H1 (cell line): ENCODE measurements at regions of chr11 and their contacts with region 1.

Region 1: DNA sequence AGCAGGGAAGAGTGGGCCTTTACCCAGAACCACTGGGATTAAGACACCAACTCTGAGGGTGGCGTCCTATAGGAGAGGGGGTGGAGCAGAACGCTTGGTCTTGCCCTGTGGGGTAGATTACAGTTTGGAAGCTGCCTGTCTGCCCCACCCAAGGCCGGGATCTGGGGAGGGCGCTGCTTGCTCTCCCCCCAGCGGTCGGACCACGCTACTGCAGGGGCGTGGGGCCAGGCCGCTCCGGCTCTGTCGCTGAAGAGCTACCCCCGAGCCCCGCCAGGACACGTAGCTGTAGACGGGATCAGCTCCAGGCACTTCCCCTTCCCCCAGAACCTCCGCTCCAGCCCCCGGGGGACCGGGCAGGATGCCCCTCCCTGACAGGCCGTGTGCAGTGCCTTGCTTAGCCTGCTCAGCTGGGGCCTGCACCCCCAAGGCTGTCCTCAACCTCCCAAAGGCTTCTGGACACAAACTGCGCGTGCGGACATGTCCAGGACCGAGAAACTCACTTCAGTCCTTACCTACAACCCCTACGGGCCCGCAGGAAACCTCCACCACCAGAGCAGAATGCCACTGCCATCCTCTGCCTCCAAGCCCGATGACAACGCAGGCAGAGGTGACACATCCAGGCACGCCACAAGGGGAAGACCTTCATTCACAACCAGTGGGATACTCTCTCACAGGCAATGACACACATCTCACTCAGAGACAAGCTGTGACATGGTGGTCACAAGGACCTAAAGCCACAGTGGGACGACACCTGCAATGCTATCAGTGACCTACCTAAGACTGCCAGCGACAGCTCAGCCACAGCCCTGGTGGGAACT is 3.6 kb downstream of the AHNAK start:
- DNase-seq: peak in 1 of 2 experiments; percentile 96
- H3K4me3 ChIP-seq: peak overlapping the region in 2 of 4 experiments; percentile 20 to 45; a peak in 4 of 8 replicates
- H3K27ac ChIP-seq: no peak overlapping the region
- H3K4me1 ChIP-seq: peaks cover 4 to 38% (median 23%) of the 10 kb centered on the region in 4 experiments
- H3K27me3 ChIP-seq: peaks cover 33 to 51% (median 48%) of the 10 kb centered on the region in 4 experiments
- CTCF ChIP-seq: peak in 2 of 3 experiments; percentile 96 to 97; a peak in 3 of 4 replicates
- EP300 ChIP-seq: no peak
- POLR2A ChIP-seq: no peak
- RAD21 ChIP-seq: peak; percentile 91 to 95

Region 2: DNA sequence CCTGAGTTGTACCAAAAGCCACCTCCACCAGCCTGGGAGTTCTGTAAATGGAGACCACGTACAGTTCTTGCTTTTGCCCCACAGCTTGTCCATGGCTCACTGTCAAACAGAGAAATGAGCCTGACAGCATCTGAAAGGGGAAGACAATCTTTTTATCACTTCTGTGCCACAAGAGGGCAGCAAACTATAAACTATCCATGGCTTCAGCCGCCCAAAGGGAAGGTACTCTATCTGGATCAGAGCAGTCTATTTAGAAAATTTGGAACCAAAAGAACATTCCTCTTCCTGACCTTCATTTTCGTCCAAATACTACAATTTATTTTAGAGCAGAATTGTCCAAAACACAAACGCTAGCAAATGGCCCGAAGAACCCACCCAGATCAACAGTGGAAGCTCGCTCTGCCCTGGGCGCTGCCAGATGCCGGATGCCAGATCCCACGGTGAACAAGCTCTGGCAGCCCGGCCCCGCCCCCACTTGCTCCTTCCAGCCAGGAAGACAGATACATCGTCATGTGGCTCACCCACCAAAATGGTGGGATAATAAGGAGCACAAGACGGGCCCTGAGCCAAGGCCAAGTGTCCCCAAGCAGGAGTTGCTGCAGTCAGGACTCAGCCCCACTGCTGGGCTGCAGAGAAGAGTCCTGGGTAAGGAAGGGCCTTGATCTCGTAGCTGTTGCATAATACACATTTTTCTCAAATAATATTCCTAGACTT is 148.0 kb before region 1 on chr11:
- CTCF ChIA-PET with region 1: interaction called, 113 read pairs
- POLR2A ChIA-PET with region 1: interaction called, 3 read pairs
- DNase-seq: peak in 1 of 2 experiments; percentile 82
- H3K4me3 ChIP-seq: peak overlapping the region; percentile 9 to 54 (median 22); a peak in 5 of 8 replicates
- H3K27ac ChIP-seq: no peak overlapping the region
- H3K4me1 ChIP-seq: peaks cover 3 to 13% (median 4%) of the 10 kb centered on the region in 4 experiments; a peak in 5 of 7 replicates
- H3K27me3 ChIP-seq: no peaks in the 10 kb centered on the region
- CTCF ChIP-seq: peak in 2 of 3 experiments; percentile 64 to 71; a peak in 3 of 4 replicates
- EP300 ChIP-seq: no peak
- POLR2A ChIP-seq: no peak
- RAD21 ChIP-seq: peak; percentile 86 to 88

Region 3: GRCh38 chr11:62419314-62419929 is 123.5 kb before region 1 on chr11:
- CTCF ChIA-PET with region 1: interaction called, 165 read pairs
- POLR2A ChIA-PET with region 1: interaction called, 3 read pairs
- DNase-seq: no peak
- H3K4me3 ChIP-seq: no peak overlapping the region
- H3K27ac ChIP-seq: no peak overlapping the region
- H3K4me1 ChIP-seq: no peaks in the 10 kb centered on the region
- H3K27me3 ChIP-seq: peaks cover 0 to 12% (median 9%) of the 10 kb centered on the region in 4 experiments; a peak in 6 of 7 replicates
- CTCF ChIP-seq: no peak
- EP300 ChIP-seq: no peak
- POLR2A ChIP-seq: no peak
- RAD21 ChIP-seq: no peak

Region 4: DNA sequence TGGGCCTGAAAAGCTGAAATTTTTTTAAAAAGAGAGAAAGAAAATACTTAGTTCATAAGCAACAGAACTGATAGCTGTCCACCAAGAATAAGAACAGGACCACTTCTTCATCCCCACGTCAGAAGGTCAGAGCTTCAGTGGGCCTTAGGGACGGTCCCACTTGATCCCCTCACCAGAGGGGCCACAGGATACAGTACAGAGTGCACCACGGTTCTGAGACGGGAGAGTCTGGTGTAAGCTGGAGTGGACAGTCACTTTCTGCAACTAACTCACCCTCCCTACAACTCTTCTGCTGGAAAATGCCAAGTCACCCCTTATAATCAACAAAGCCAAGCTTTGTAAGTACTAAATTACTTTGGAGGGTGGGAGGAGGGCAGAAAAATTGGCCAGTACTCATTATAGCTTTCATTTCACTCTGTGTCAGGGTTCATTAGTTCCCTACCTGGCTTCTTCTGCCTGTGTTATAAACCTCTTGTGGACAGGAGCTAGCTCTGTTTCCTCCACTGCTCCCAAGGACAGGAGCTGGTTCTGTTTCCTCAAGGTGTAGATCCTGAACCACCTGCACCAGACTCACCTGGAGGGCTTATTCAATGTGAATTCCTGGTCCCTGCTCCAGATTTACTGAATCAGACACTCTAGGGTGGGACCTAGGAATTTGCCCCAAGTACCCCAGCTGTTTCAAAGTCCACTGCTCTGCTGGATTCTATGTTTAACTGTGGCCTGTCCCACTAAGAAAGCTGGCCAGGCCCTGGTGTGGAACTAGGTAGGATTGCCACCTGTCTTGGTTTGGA is 84.6 kb before region 1 on chr11:
- CTCF ChIA-PET with region 1: interaction called, 22 read pairs
- POLR2A ChIA-PET with region 1: no interaction called
- DNase-seq: no peak
- H3K4me3 ChIP-seq: no peak overlapping the region
- H3K27ac ChIP-seq: no peak overlapping the region
- H3K4me1 ChIP-seq: no peaks in the 10 kb centered on the region; a peak in 1 of 7 replicates
- H3K27me3 ChIP-seq: no peaks in the 10 kb centered on the region; a peak in 1 of 7 replicates
- CTCF ChIP-seq: no peak
- EP300 ChIP-seq: no peak
- POLR2A ChIP-seq: no peak
- RAD21 ChIP-seq: no peak

Region 5: GRCh38 chr11:62508268-62509058 is 34.5 kb before region 1 on chr11:
- CTCF ChIA-PET with region 1: interaction called, 179 read pairs
- POLR2A ChIA-PET with region 1: interaction called, 9 read pairs
- DNase-seq: peak; percentile 43 to 77
- H3K4me3 ChIP-seq: peak overlapping the region in 3 of 4 experiments; percentile 6 to 26 (median 7); a peak in 4 of 8 replicates
- H3K27ac ChIP-seq: peak overlapping the region; percentile 48
- H3K4me1 ChIP-seq: peaks cover 8 to 21% (median 15%) of the 10 kb centered on the region in 4 experiments
- H3K27me3 ChIP-seq: peaks cover 0 to 11% (median 4%) of the 10 kb centered on the region in 4 experiments; a peak in 4 of 7 replicates
- CTCF ChIP-seq: peak; percentile 24 to 68 (median 64); a peak in 3 of 4 replicates
- EP300 ChIP-seq: no peak; a peak in 1 of 3 replicates
- POLR2A ChIP-seq: no peak
- RAD21 ChIP-seq: peak; percentile 29 to 33; a peak in 2 of 4 replicates

Region 6: GRCh38 chr11:62567018-62567633 is 24.2 kb after region 1 on chr11:
- CTCF ChIA-PET with region 1: interaction called, 17 read pairs
- POLR2A ChIA-PET with region 1: interaction called, 336 read pairs
- DNase-seq: no peak
- H3K4me3 ChIP-seq: no peak overlapping the region
- H3K27ac ChIP-seq: no peak overlapping the region
- H3K4me1 ChIP-seq: peaks cover 2 to 6% (median 2%) of the 10 kb centered on the region in 4 experiments; a peak in 3 of 7 replicates
- H3K27me3 ChIP-seq: no peaks in the 10 kb centered on the region
- CTCF ChIP-seq: no peak
- EP300 ChIP-seq: no peak
- POLR2A ChIP-seq: no peak
- RAD21 ChIP-seq: no peak

Region 7: DNA sequence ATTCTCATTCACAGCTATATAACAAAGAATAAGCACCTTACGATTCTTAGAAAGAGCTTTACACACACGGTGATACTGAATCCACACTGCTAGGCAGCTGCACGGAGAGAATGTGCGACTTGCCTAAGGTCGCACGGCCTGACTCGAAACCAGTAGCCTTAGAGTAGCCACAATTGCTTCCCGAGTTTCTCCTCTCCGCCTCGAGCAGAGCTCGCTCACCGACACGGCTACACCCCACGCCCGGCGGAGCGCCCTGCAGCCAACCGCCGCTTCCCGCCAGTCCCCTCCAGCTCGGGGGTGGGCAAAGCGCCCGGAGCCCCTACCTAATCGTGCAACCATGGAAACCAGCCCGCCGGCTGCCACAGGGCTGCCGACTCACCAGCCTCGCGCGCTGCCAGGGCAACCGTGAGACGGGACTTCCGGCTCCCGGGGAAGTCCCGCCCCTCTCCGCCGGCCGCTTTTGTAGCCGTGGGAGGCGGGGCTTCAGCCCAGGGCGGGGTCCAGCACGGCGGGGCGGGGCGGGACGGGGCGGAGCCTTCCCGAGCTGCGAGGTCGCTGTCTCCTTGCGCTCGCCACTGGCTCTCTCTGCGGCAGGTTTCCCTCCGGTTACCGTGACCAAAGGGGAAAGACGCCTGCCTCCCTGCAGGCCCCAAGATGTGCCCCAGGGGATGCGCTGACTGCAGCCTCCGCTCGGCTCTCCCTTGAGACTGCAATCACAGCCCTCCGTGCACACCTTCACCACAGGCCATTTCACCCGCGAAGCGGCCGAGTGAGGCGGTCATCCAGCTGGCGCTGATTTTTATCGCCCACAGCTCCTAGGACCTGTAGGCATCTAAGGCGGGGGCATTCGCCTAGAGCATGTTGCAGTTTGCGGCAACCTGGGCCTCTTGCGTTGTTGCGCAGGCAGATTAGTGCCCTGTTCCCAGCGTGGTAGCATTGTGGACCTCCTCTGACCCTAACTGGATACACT is 163.2 kb after region 1 on chr11:
- CTCF ChIA-PET with region 1: no interaction called
- POLR2A ChIA-PET with region 1: no interaction called
- DNase-seq: peak; percentile 82 to 95
- H3K4me3 ChIP-seq: peak overlapping the region; percentile 64 to 83 (median 82)
- H3K27ac ChIP-seq: peak overlapping the region; percentile 65
- H3K4me1 ChIP-seq: peaks cover 7 to 34% (median 20%) of the 10 kb centered on the region in 4 experiments
- H3K27me3 ChIP-seq: no peaks in the 10 kb centered on the region
- CTCF ChIP-seq: no peak
- EP300 ChIP-seq: no peak
- POLR2A ChIP-seq: peak in 1 of 2 experiments; percentile 62; a peak in 2 of 3 replicates
- RAD21 ChIP-seq: no peak